Mammary epithelial cell (primary cell): ENCODE measurements at regions of chrX and their contacts with region 1.

Region 1: GRCh38 chrX:16123222-16123786 is at the start of gene GRPR:
- DNase-seq: peak; percentile 80
- H3K4me3 ChIP-seq: no peak within 1 kb of the TSS
- H3K27ac ChIP-seq: no peak within 1 kb of the TSS
- H3K4me1 ChIP-seq: peaks cover 6% of the 10 kb centered on the region
- H3K27me3 ChIP-seq: no peaks in the 10 kb centered on the region
- CTCF ChIP-seq: peak; percentile 92 to 94
- total RNA-seq, gene GRPR: 0.14 to 0.17 TPM

Region 2: DNA sequence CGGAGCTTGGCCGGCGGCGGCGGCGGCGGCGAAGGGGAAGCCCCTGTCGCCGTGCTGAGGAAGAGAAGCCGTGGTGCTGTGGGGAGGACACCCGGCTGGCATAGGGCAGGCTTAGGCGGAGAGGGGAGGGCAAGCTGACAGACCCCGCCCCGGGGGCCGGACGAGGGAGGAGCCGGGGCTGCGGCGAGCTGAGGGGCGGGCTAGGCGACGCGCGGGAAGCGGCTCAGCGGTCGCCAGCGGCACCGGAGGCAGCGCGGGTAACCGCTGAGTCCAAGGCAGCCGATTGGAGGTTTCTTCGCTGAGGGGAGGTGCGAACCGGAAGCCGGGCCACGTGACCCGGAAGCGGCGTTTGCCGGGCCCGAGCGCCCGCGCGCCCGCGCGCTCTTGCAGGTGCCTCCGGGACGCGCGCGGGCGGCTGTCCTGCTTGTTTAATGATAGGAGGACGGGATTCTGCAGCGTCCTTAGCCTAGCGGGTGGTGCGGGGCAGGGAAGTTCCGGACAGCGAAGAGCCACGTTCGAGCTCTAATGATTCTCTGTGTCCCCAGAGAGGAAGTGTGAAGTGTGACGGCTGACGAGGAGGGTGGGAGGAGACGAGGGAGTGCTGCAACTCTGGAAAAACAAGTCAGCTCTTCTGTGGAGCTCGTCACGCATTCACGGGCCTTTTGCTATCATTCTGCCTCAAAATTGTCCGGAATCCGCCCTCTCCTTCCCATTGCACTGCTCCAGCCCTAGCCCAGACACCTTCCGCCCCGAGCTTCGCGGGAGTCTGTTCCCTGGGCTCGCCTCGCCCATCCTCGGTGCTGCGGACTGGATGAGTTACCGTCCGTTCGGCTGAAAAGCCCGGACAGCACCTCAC is 268.4 kb before region 1 on chrX and contains the start of gene AP1S2:
- CTCF ChIA-PET with region 1: no interaction called
- dilution Hi-C with region 1: no loop called
- in situ Hi-C with region 1: no loop called
- intact Hi-C with region 1: loop called (anchors 10 kb)
- DNase-seq: peak; percentile 98
- H3K4me3 ChIP-seq: peak within 1 kb of the TSS; percentile 67 to 90 (median 73)
- H3K27ac ChIP-seq: peak within 1 kb of the TSS; percentile 32
- H3K4me1 ChIP-seq: peaks cover 15% of the 10 kb centered on the region
- H3K27me3 ChIP-seq: no peaks in the 10 kb centered on the region
- CTCF ChIP-seq: no peak
- total RNA-seq, gene AP1S2: 15.8 to 21.6 TPM

Region 3: DNA sequence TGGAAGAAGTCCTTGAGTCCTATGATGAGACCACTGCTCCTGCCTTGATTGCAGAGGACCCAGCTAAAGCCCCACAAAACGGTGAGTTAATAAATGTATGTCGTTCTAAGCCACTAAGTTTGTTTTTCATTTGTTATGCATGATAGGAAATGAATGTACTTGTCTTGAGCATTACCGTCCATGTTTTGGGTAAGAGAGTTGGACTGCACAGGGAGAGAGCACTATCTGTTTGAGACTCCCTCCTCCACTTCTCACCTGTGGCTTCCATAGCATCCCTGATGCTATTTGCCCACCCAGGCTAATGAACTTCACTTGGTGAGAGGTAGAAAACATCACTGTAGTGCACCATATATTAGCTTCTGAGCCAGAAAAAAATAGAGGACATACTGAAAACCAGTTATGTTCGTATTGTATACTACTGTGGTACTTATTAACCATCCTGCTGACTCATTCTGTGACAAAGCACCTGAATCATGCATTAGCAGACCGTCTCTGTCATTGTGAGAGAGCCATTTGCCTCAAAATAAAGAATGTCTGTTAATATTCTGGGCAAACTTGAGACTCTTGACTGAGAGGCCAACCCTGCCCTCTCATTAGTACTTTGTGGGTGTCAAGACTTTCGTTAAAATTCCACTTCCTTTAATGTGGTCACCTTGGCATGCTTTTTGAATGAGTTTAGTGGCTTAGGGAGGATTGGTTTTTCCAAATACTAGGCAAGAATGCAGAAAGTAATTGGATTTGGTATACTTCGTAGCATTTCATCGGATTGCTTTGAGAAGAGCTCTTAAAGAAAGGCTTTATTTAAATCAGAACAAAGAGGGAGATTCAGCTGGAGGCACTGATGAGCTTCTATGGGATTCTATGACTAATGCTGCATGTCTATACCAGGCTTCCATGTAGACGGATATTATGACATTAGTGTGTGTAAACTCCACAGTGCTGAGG is 99.2 kb before region 1 on chrX:
- CTCF ChIA-PET with region 1: no interaction called
- dilution Hi-C with region 1: no loop called
- in situ Hi-C with region 1: no loop called
- intact Hi-C with region 1: no loop called
- DNase-seq: peak; percentile 80
- H3K4me3 ChIP-seq: no peak overlapping the region
- H3K27ac ChIP-seq: peak overlapping the region; percentile 80
- H3K4me1 ChIP-seq: peaks cover 34% of the 10 kb centered on the region
- H3K27me3 ChIP-seq: no peaks in the 10 kb centered on the region
- CTCF ChIP-seq: no peak

Region 4: GRCh38 chrX:16081357-16081756 is 41.9 kb before region 1 on chrX:
- CTCF ChIA-PET with region 1: no interaction called
- dilution Hi-C with region 1: no loop called
- in situ Hi-C with region 1: no loop called
- intact Hi-C with region 1: no loop called
- DNase-seq: no peak
- H3K4me3 ChIP-seq: no peak overlapping the region
- H3K27ac ChIP-seq: no peak overlapping the region
- H3K4me1 ChIP-seq: no peaks in the 10 kb centered on the region
- H3K27me3 ChIP-seq: peaks cover 2% of the 10 kb centered on the region
- CTCF ChIP-seq: no peak

Region 5: GRCh38 chrX:16212436-16212835 is 89.1 kb after region 1 on chrX:
- CTCF ChIA-PET with region 1: no interaction called
- dilution Hi-C with region 1: no loop called
- in situ Hi-C with region 1: no loop called
- intact Hi-C with region 1: loop called (anchors 1 kb)
- DNase-seq: no peak
- H3K4me3 ChIP-seq: no peak overlapping the region
- H3K27ac ChIP-seq: no peak overlapping the region
- H3K4me1 ChIP-seq: peaks cover 7% of the 10 kb centered on the region
- H3K27me3 ChIP-seq: no peaks in the 10 kb centered on the region
- CTCF ChIP-seq: peak; percentile 26 to 31

Region 6: GRCh38 chrX:16305187-16305586 is 181.9 kb after region 1 on chrX:
- CTCF ChIA-PET with region 1: no interaction called
- dilution Hi-C with region 1: no loop called
- in situ Hi-C with region 1: no loop called
- intact Hi-C with region 1: loop called (anchors 1 kb)
- DNase-seq: no peak
- H3K4me3 ChIP-seq: no peak overlapping the region
- H3K27ac ChIP-seq: no peak overlapping the region
- H3K4me1 ChIP-seq: no peaks in the 10 kb centered on the region
- H3K27me3 ChIP-seq: peaks cover 7% of the 10 kb centered on the region
- CTCF ChIP-seq: no peak

Region 7: GRCh38 chrX:16664074-16664473 is 540.8 kb after region 1 on chrX:
- CTCF ChIA-PET with region 1: no interaction called
- dilution Hi-C with region 1: no loop called
- in situ Hi-C with region 1: loop called in 1 of 2 experiments (anchors 25 kb)
- intact Hi-C with region 1: loop called (anchors 1 kb)
- DNase-seq: no peak
- H3K4me3 ChIP-seq: no peak overlapping the region
- H3K27ac ChIP-seq: no peak overlapping the region
- H3K4me1 ChIP-seq: no peaks in the 10 kb centered on the region
- H3K27me3 ChIP-seq: no peaks in the 10 kb centered on the region
- CTCF ChIP-seq: peak in 1 of 2 donors; percentile 34

Region 8: GRCh38 chrX:16687514-16687913 is 564.2 kb after region 1 on chrX:
- CTCF ChIA-PET with region 1: no interaction called
- dilution Hi-C with region 1: no loop called
- in situ Hi-C with region 1: loop called in 1 of 2 experiments (anchors 10 kb)
- intact Hi-C with region 1: no loop called
- DNase-seq: no peak
- H3K4me3 ChIP-seq: no peak overlapping the region
- H3K27ac ChIP-seq: no peak overlapping the region
- H3K4me1 ChIP-seq: no peaks in the 10 kb centered on the region
- H3K27me3 ChIP-seq: no peaks in the 10 kb centered on the region
- CTCF ChIP-seq: no peak